HCT116 (cell line): ENCODE measurements at regions of chr16 and their contacts with region 1.

Region 1: GRCh38 chr16:75251280-75252048 is at the start of gene BCAR1:
- DNase-seq: no peak
- ATAC-seq: peak; percentile 88
- H3K4me3 ChIP-seq: peak within 1 kb of the TSS; percentile 73 to 87
- H3K27ac ChIP-seq: peak within 1 kb of the TSS; percentile 93
- H3K4me1 ChIP-seq: peaks cover 57 to 85% of the 10 kb centered on the region in 2 experiments
- H3K27me3 ChIP-seq: no peaks in the 10 kb centered on the region
- CTCF ChIP-seq: peak in 1 of 3 experiments; percentile 1; a peak in 1 of 6 replicates
- POLR2A ChIP-seq: peak; percentile 57
- RAD21 ChIP-seq: no peak
- total RNA-seq, gene BCAR1: 49.6 TPM

Region 2: DNA sequence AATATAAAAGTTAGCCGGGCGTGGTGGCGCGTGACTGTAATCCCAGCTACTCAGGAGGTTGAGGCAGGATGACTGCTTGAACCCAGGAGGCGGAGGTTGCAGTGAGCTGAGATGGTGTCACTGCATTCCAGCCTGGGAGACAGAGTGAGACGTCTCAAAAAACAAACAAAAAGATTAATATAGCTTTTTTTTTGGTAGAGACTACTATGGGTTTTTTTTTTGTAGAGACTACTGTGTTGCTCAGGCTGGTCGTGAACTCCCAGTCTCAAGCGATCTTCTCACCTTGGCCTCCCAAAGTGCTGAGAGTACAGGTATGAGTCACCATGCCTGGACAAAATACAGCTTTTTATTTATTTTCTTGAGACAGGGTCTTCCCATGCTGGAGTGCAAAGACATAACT is 232.5 kb before region 1 on chr16:
- CTCF ChIA-PET with region 1: no interaction called
- POLR2A ChIA-PET with region 1: no interaction called
- RAD21 ChIA-PET with region 1: no interaction called
- intact Hi-C with region 1: no loop called
- DNase-seq: no peak
- ATAC-seq: peak; percentile 43
- H3K4me3 ChIP-seq: no peak overlapping the region; a peak in 1 of 4 replicates
- H3K27ac ChIP-seq: peak overlapping the region; percentile 53; the same call in 1 of the 2 replicates
- H3K4me1 ChIP-seq: peaks cover 49 to 57% of the 10 kb centered on the region in 2 experiments
- H3K27me3 ChIP-seq: no peaks in the 10 kb centered on the region
- CTCF ChIP-seq: no peak
- POLR2A ChIP-seq: no peak
- RAD21 ChIP-seq: no peak

Region 3: GRCh38 chr16:75265845-75266701 is 14.6 kb after region 1 on chr16:
- CTCF ChIA-PET with region 1: no interaction called
- POLR2A ChIA-PET with region 1: interaction called, 3 read pairs
- RAD21 ChIA-PET with region 1: no interaction called
- intact Hi-C with region 1: loop called (anchors 2 kb)
- DNase-seq: no peak
- ATAC-seq: peak; percentile 68
- H3K4me3 ChIP-seq: peak overlapping the region; percentile 82 to 91
- H3K27ac ChIP-seq: peak overlapping the region; percentile 88
- H3K4me1 ChIP-seq: peaks cover 50 to 71% of the 10 kb centered on the region in 2 experiments
- H3K27me3 ChIP-seq: no peaks in the 10 kb centered on the region
- CTCF ChIP-seq: no peak
- POLR2A ChIP-seq: no peak
- RAD21 ChIP-seq: no peak